CD8-positive, alpha-beta T cell (primary cell): ENCODE measurements at regions of chr9 and their contacts with region 1.

Region 1: DNA sequence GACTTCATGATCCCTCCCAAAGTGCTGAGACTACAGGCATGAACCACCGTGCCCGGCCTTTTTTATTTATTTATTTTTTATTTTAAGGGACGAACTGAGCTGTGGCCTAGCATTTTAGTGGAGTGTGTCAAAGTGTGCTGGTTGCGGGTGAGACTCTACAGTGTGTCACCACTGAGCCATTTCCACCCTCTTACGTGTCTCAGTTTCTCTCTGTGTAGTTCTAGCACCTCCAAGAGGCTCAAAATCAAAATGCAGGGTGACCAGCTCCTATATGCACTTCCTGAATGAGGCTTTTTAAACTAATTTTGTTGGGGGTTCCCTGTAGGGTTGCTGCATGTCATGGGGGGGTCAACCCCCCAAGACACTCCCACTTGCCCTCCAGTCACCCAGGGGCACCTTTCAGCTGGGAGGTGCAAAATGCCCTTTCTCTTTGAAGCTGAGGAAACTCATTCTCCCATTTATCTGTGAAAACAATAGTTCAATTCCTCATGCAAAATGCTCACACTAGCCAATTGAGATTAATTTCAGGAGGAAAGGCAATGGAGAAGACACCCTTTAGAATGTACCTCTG is 69.3 kb downstream of the COL15A1 start:
- DNase-seq: peak in 4 of 9 experiments; percentile 25 to 68 (median 52)
- ATAC-seq: peak; percentile 73
- H3K4me3 ChIP-seq: peak overlapping the region in 1 of 2 experiments; percentile 24
- H3K4me3 Mint-ChIP-seq: peak overlapping the region; percentile 74
- H3K27ac ChIP-seq: peak overlapping the region; percentile 35 to 81
- H3K27ac Mint-ChIP-seq: peak overlapping the region; percentile 95
- H3K4me1 ChIP-seq: peaks cover 20% of the 10 kb centered on the region
- H3K4me1 Mint-ChIP-seq: peaks cover 32% of the 10 kb centered on the region
- H3K27me3 ChIP-seq: no peaks in the 10 kb centered on the region
- H3K27me3 Mint-ChIP-seq: no peaks in the 10 kb centered on the region
- CTCF ChIP-seq: peak; percentile 42

Region 2: GRCh38 chr9:98833090-98833956 is 179.7 kb before region 1 on chr9:
- CTCF ChIA-PET with region 1: no interaction called
- POLR2A ChIA-PET with region 1: no interaction called
- intact Hi-C with region 1: no loop called
- DNase-seq: no peak
- ATAC-seq: no peak
- H3K4me3 ChIP-seq: no peak overlapping the region
- H3K4me3 Mint-ChIP-seq: no peak overlapping the region
- H3K27ac ChIP-seq: no peak overlapping the region
- H3K27ac Mint-ChIP-seq: no peak overlapping the region
- H3K4me1 ChIP-seq: no peaks in the 10 kb centered on the region
- H3K4me1 Mint-ChIP-seq: no peaks in the 10 kb centered on the region
- H3K27me3 ChIP-seq: no peaks in the 10 kb centered on the region
- H3K27me3 Mint-ChIP-seq: no peaks in the 10 kb centered on the region
- CTCF ChIP-seq: no peak

Region 3: DNA sequence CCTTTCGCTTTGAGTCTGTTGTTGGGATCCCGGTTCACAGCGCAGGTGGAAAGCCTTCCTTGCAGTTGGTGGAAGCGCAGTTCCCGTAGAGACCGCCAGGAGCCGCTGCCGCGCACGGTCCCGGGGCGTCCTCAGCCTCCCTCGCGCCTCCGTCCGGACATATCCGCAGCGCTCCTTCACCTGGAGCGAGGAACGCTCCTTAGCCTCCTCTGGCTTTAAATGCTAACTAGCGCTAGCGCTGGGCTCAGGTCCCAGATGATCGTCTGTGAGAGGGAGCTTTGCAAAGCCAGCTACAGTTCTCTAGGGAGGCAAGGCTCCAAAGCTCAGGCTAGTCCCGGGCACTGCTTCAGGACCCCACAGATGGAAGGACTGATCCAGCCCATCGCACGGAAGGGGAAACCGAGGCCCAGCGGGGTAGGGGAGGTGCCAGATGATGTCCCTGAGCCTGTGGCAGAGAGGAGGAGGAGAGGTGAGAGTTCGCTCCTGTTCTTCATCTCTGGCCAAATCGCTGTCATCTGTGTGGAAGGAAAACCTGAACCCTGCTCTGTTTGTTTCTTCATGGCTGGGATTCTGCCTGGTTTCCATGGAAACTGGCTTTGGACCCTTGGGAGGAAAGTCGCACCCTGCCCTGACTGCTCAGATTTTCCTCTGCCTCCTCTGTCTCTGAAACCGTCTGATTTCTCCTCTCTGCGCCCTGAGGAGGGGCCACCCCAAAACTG is 37.9 kb before region 1 on chr9:
- CTCF ChIA-PET with region 1: interaction called, 26 read pairs
- POLR2A ChIA-PET with region 1: no interaction called
- intact Hi-C with region 1: no loop called
- DNase-seq: peak; percentile 66 to 88 (median 81)
- ATAC-seq: peak; percentile 99
- H3K4me3 ChIP-seq: peak overlapping the region; percentile 33
- H3K4me3 Mint-ChIP-seq: peak overlapping the region; percentile 67
- H3K27ac ChIP-seq: no peak overlapping the region
- H3K27ac Mint-ChIP-seq: no peak overlapping the region
- H3K4me1 ChIP-seq: peaks cover 18% of the 10 kb centered on the region
- H3K4me1 Mint-ChIP-seq: peaks cover 6% of the 10 kb centered on the region
- H3K27me3 ChIP-seq: peaks cover 0 to 7% of the 10 kb centered on the region in 2 experiments
- H3K27me3 Mint-ChIP-seq: peaks cover 7% of the 10 kb centered on the region
- CTCF ChIP-seq: peak; percentile 97